ENCODE measurements at regions of chr12 and their contacts with region 1.

Region 1: DNA sequence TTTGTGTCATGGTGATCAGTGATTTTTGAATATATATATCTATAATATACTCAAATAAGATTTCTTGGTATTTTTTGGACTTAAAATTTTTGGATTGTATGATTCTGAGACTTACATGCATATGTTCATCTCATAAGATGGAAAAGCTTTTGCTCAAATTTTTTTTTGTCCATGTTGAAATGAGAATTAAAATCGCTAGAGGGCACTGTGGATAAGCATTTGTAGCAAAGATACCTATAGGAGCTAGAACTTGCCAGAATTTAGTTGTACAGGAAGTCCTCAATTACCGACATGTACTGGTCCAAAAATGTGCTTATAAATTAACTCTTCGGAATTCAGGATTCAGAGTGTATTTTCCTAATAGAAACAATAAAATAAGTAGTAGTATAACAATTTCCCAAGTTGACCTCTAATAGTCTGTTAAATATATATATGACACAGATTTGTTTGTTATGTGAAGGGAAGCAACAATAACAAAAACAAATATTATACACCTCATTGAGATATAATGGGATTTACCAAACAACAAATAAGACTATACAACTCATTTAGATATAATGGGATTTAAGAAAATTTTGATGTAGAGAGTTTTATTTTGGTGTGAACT is 179.6 kb downstream of the TMEM117 start:
- DNase-seq: peak; percentile 90
- H3K4me3 ChIP-seq: no peak overlapping the region
- H3K27ac ChIP-seq: peak overlapping the region; percentile 56
- H3K4me1 ChIP-seq: peaks cover 33% of the 10 kb centered on the region
- H3K27me3 ChIP-seq: no peaks in the 10 kb centered on the region
- CTCF ChIP-seq: peak; percentile 71

Region 2: GRCh38 chr12:44317651-44318126 is 302.3 kb after region 1 on chr12:
- CTCF ChIA-PET with region 1: no interaction called
- POLR2A ChIA-PET with region 1: no interaction called
- intact Hi-C with region 1: loop called (anchors 10 kb)
- DNase-seq: peak; percentile 81
- H3K4me3 ChIP-seq: no peak overlapping the region
- H3K27ac ChIP-seq: no peak overlapping the region
- H3K4me1 ChIP-seq: peaks cover 31% of the 10 kb centered on the region
- H3K27me3 ChIP-seq: no peaks in the 10 kb centered on the region
- CTCF ChIP-seq: peak; percentile 67

Region 3: GRCh38 chr12:44509471-44509870 is 494.0 kb after region 1 on chr12:
- CTCF ChIA-PET with region 1: interaction called, 3 read pairs
- POLR2A ChIA-PET with region 1: no interaction called
- intact Hi-C with region 1: loop called (anchors 10 kb)
- DNase-seq: peak; percentile 42
- H3K4me3 ChIP-seq: no peak overlapping the region
- H3K27ac ChIP-seq: peak overlapping the region; percentile 7
- H3K4me1 ChIP-seq: peaks cover 56% of the 10 kb centered on the region
- H3K27me3 ChIP-seq: no peaks in the 10 kb centered on the region
- CTCF ChIP-seq: no peak

Region 4: DNA sequence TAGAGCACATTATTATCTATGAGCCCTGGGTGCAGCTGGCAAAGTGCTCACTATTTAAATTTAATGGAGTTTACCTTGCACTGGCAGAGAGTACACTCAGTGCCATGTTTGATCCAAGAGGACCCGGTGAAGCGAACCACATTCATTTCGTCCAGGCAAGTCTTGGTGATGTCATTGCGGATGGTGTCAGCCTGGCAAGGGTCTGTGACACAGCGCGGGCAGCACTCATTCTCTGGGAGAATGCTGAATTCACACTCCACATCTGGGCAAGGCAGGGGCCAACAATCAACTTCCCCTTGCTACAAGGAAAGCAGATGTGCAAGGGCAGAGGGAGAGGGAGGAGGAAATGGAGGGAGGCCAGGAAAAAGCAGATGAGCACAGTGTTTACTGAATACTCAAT is 504.5 kb after region 1 on chr12:
- CTCF ChIA-PET with region 1: no interaction called
- POLR2A ChIA-PET with region 1: interaction called, 12 read pairs
- intact Hi-C with region 1: no loop called
- DNase-seq: no peak
- H3K4me3 ChIP-seq: no peak overlapping the region
- H3K27ac ChIP-seq: no peak overlapping the region
- H3K4me1 ChIP-seq: no peaks in the 10 kb centered on the region
- H3K27me3 ChIP-seq: no peaks in the 10 kb centered on the region
- CTCF ChIP-seq: no peak

Region 5: DNA sequence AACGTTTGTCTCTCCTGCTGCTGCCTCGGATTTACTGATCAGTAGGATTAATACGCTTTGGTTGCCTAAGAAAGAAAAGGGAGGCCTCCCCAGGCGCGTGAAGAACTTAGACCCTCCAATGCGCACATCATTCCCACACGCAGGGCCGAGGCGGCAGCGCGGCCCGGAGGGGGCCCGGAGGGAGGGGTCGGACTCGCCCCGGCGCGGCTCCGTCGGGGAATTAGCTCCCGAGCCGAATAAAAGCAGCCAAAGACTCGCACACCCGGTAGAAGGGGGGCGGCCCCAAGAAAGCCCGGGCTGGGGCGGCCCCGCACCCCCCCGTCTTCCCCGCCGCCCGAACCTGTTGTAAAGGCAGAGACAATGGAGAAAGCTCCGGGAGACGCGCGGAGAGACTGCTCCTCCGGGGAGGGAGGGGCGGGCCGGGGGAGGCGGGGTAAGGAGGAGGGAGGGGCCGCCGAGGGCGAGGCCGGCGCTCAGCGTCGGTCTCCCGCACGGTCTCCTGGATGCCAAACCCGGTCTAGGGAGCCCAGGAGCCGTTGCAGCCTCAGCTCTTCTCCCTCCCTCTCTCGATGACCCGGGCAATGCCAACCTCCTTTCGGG is 860.6 kb after region 1 on chr12 and contains the start of gene NELL2:
- CTCF ChIA-PET with region 1: interaction called, 6 read pairs
- POLR2A ChIA-PET with region 1: interaction called, 5 read pairs
- intact Hi-C with region 1: loop called (anchors 5 kb)
- DNase-seq: peak; percentile 96
- H3K4me3 ChIP-seq: peak within 1 kb of the TSS; percentile 95
- H3K27ac ChIP-seq: peak within 1 kb of the TSS; percentile 96
- H3K4me1 ChIP-seq: peaks cover 15% of the 10 kb centered on the region
- H3K27me3 ChIP-seq: no peaks in the 10 kb centered on the region
- CTCF ChIP-seq: no peak
- total RNA-seq, gene NELL2: 596 and 641 TPM in 2 replicates

Region 6: GRCh38 chr12:44930972-44931600 is 915.6 kb after region 1 on chr12:
- CTCF ChIA-PET with region 1: interaction called, 3 read pairs
- POLR2A ChIA-PET with region 1: no interaction called
- intact Hi-C with region 1: loop called (anchors 1 kb)
- DNase-seq: peak; percentile 96
- H3K4me3 ChIP-seq: no peak overlapping the region
- H3K27ac ChIP-seq: peak overlapping the region; percentile 81
- H3K4me1 ChIP-seq: peaks cover 27% of the 10 kb centered on the region
- H3K27me3 ChIP-seq: no peaks in the 10 kb centered on the region
- CTCF ChIP-seq: peak; percentile 67

Region 7: GRCh38 chr12:44947163-44947562 is 931.7 kb after region 1 on chr12:
- CTCF ChIA-PET with region 1: interaction called, 12 read pairs
- POLR2A ChIA-PET with region 1: no interaction called
- intact Hi-C with region 1: no loop called
- DNase-seq: no peak
- H3K4me3 ChIP-seq: no peak overlapping the region
- H3K27ac ChIP-seq: no peak overlapping the region
- H3K4me1 ChIP-seq: no peaks in the 10 kb centered on the region
- H3K27me3 ChIP-seq: no peaks in the 10 kb centered on the region
- CTCF ChIP-seq: no peak

Measured in A673 (cell line).